PC-9 (cell line): ENCODE measurements at regions of chr18 and their contacts with region 1.

Region 1: GRCh38 chr18:62714671-62715435 is 488 bp upstream of the PHLPP1 start:
- DNase-seq: peak; percentile 96 to 98
- H3K4me3 ChIP-seq: peak overlapping the region; percentile 60; the same call in 1 of the 2 replicates
- H3K27ac ChIP-seq: peak overlapping the region; percentile 28; the same call in 1 of the 2 replicates
- H3K4me1 ChIP-seq: peaks cover 16% of the 10 kb centered on the region
- H3K27me3 ChIP-seq: no peaks in the 10 kb centered on the region
- CTCF ChIP-seq: peak; percentile 67

Region 2: GRCh38 chr18:62186774-62187542 is 527.9 kb before region 1 on chr18 and contains the starts of genes PIGN and RELCH:
- CTCF ChIA-PET with region 1: no interaction called
- POLR2A ChIA-PET with region 1: no interaction called
- intact Hi-C with region 1: loop called (anchors 10 kb)
- DNase-seq: peak; percentile 89 to 96
- H3K4me3 ChIP-seq: peak within 1 kb of the TSS; percentile 92
- H3K27ac ChIP-seq: peak within 1 kb of the TSS; percentile 76
- H3K4me1 ChIP-seq: peaks cover 42% of the 10 kb centered on the region
- H3K27me3 ChIP-seq: no peaks in the 10 kb centered on the region
- CTCF ChIP-seq: no peak
- total RNA-seq, gene PIGN: 14.6 and 20.3 TPM in 2 replicates
- total RNA-seq, gene RELCH: 19.6 and 20.1 TPM in 2 replicates

Region 3: DNA sequence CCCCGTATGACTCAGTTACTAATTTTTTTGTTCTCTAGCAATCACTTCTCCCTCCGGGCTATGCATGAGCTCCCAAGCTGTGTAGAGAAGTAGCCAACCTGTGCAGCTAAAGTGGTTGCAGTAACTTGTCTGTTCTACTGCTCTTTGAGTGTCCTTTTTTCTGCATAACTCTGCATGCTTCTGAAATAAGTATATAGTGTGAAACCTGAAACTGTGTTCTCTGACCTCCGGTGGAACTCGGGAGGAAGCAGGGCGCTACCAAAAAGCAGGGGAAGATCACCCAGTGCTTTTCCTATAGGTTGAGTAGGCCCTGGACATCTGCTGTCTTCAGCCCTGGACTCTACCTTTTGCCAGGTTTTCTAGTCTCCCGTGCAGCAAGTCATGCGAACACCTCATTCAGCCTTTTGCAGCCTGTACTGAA is 48.3 kb after region 1 on chr18:
- CTCF ChIA-PET with region 1: no interaction called
- POLR2A ChIA-PET with region 1: interaction called, 6 read pairs
- intact Hi-C with region 1: loop called (anchors 5 kb)
- DNase-seq: peak; percentile 27 to 66
- H3K4me3 ChIP-seq: no peak overlapping the region
- H3K27ac ChIP-seq: peak overlapping the region; percentile 31
- H3K4me1 ChIP-seq: peaks cover 60% of the 10 kb centered on the region
- H3K27me3 ChIP-seq: no peaks in the 10 kb centered on the region
- CTCF ChIP-seq: no peak

Region 4: DNA sequence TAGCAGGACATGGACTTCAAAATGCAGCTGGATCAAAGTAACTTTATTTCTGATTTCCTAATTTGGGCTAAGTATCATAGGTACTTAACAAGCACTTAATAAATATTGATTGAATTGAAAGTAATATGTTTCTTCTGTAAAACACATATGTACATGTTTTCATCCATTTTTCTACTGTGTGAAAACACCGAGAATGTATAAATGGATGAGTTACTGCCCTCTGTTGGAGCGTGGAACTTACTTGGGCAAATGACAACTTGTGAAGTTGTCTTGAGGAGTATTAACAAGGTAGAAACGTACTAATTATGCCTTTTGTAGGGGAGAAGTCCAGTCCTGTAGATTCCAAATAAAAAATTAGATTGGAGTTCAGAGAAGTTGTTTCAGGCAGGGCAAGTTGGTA is 87.7 kb after region 1 on chr18:
- CTCF ChIA-PET with region 1: no interaction called
- POLR2A ChIA-PET with region 1: interaction called, 3 read pairs
- intact Hi-C with region 1: loop called (anchors 5 kb)
- DNase-seq: no peak
- H3K4me3 ChIP-seq: no peak overlapping the region
- H3K27ac ChIP-seq: no peak overlapping the region
- H3K4me1 ChIP-seq: peaks cover 45% of the 10 kb centered on the region
- H3K27me3 ChIP-seq: no peaks in the 10 kb centered on the region
- CTCF ChIP-seq: no peak

Region 5: GRCh38 chr18:62957885-62958472 is 243.1 kb after region 1 on chr18:
- CTCF ChIA-PET with region 1: interaction called, 16 read pairs
- POLR2A ChIA-PET with region 1: no interaction called
- intact Hi-C with region 1: loop called (anchors 2 kb)
- DNase-seq: peak in 1 of 2 experiments; percentile 34
- H3K4me3 ChIP-seq: no peak overlapping the region
- H3K27ac ChIP-seq: no peak overlapping the region
- H3K4me1 ChIP-seq: no peaks in the 10 kb centered on the region
- H3K27me3 ChIP-seq: no peaks in the 10 kb centered on the region
- CTCF ChIP-seq: peak; percentile 70

Region 6: GRCh38 chr18:63492851-63493250 is 778.0 kb after region 1 on chr18:
- CTCF ChIA-PET with region 1: no interaction called
- POLR2A ChIA-PET with region 1: interaction called, 11 read pairs
- intact Hi-C with region 1: no loop called
- DNase-seq: no peak
- H3K4me3 ChIP-seq: no peak overlapping the region
- H3K27ac ChIP-seq: no peak overlapping the region
- H3K4me1 ChIP-seq: no peaks in the 10 kb centered on the region
- H3K27me3 ChIP-seq: no peaks in the 10 kb centered on the region
- CTCF ChIP-seq: no peak